ENCODE measurements at regions of chr2 and their contacts with region 1.

Region 1: GRCh38 chr2:173033084-173033483 is 42.6 kb upstream of the MAP3K20 start:
- DNase-seq: no peak
- H3K4me3 ChIP-seq: no peak overlapping the region
- CTCF ChIP-seq: no peak

Region 2: GRCh38 chr2:173218326-173219056 is 185.4 kb after region 1 on chr2:
- in situ Hi-C with region 1: loop called (anchors 5 kb)
- DNase-seq: no peak
- H3K4me3 ChIP-seq: no peak overlapping the region
- CTCF ChIP-seq: no peak